ENCODE measurements at regions of chr5 and their contacts with region 1.

Region 1: DNA sequence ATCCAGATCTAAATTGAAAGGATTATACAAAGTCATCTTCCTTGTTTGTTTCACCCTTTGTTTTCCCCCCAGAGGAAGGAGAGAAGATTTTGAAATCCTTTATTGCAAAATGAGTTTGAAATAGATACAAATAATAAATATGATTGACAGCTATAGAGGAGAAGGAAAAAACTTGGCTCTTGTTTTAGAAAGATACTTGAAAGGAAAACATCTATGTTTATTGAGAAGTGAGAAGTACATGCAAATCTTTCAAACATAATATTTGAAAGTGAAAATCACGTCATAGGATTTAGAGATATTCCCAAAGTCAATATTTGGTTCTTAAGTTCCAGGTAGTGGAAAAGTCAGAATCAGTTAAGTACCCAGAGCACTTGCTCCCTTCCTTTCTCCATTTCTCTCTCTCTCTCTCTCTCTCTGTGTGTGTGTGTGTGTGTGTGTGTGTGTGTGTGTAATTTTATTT is 27.2 kb downstream of the PAM start:
- DNase-seq: no peak
- H3K4me3 ChIP-seq: peak overlapping the region in 1 of 4 donors; percentile 8
- H3K27ac ChIP-seq: no peak overlapping the region
- H3K4me1 ChIP-seq: peaks cover 18 to 36% of the 10 kb centered on the region in 2 donors
- H3K27me3 ChIP-seq: no peaks in the 10 kb centered on the region
- CTCF ChIP-seq: no peak
- POLR2A ChIP-seq: no peak

Region 2: DNA sequence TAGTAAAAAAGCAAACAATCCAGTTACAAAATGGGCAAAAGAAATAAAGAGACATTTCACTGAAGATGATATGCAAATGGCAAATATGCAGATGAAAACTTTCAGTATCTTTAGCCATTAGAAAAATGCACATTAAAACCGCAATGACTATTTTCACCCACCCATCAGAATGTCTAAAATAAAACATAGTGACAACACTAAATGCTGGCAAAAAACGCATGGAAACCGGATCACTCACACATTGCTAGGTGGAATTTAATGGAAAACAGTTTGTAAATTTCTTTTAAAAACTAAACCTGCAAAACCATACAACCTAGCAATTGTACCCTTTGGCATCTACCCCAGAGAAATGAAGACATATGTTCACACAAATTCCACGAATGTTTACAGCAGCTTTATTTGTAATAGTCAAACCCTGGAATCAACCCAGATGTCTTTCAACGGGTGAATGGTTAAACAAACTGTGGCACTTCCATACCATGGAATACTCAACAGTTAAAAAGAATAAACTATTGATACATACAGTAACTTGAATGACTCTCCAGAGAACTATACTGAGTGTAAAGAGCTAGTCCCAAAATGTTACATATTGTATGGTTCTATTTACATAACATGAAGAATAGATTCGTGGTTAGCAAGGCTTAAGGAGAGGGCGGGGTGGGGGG is 44.4 kb before region 1 on chr5:
- intact Hi-C with region 1: no loop called
- DNase-seq: no peak
- H3K4me3 ChIP-seq: no peak overlapping the region
- H3K27ac ChIP-seq: no peak overlapping the region
- H3K4me1 ChIP-seq: no peaks in the 10 kb centered on the region
- H3K27me3 ChIP-seq: no peaks in the 10 kb centered on the region
- CTCF ChIP-seq: no peak
- POLR2A ChIP-seq: no peak

Region 3: GRCh38 chr5:102971697-102972293 is 189.5 kb after region 1 on chr5:
- intact Hi-C with region 1: loop called in 1 of 2 experiments (anchors 10 kb)
- DNase-seq: no peak
- H3K4me3 ChIP-seq: no peak overlapping the region
- H3K27ac ChIP-seq: no peak overlapping the region
- H3K4me1 ChIP-seq: no peaks in the 10 kb centered on the region
- H3K27me3 ChIP-seq: no peaks in the 10 kb centered on the region
- CTCF ChIP-seq: peak; percentile 35 to 64 (median 53)
- POLR2A ChIP-seq: no peak

Measured in adrenal gland (tissue), 19 donors.